ENCODE measurements at regions of chr11 and their contacts with region 1.

Region 1: GRCh38 chr11:69642913-69643632 is 2.1 kb downstream of the CCND1 start:
- DNase-seq: peak; percentile 87
- CTCF ChIP-seq: peak; percentile 89

Region 2: GRCh38 chr11:69101115-69101791 is 541.8 kb before region 1 on chr11:
- CTCF ChIA-PET with region 1: interaction called, 62 read pairs
- POLR2A ChIA-PET with region 1: no interaction called
- DNase-seq: peak; percentile 86
- CTCF ChIP-seq: peak; percentile 99

Region 3: GRCh38 chr11:69463181-69463994 is 179.7 kb before region 1 on chr11:
- CTCF ChIA-PET with region 1: no interaction called
- POLR2A ChIA-PET with region 1: no interaction called
- DNase-seq: no peak
- CTCF ChIP-seq: no peak

Region 4: DNA sequence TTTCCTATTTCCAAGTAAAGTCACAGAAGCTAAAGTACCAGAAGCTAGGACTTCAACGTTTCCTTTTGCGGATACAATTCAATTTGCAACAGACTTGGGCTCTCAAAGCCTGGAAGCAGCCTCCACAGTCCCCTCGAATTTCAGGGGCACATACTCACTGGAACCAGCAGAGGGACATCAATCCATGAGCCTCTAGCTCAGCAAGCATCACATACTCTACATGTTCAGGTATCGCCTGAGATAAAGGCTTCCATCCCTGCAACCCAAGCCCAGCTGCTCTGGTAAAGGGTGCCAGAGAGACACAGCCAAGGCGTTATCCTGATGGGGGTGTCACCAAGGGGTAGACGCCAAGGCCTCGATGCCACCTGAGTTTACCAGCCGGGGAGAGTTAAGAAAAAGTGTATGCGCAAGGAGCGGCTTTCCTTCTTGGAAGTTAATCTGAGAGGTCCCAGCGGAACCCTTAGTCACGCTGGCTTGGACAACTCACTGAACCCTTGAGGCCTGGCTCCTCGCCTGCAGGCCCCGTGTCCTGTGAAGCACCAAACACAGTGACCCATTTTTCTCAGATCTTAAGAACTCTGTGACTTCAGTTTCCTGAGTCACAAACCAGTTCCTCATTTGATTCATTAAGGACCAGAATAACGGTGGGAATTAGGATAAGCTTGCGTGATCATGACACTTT is 19.1 kb after region 1 on chr11:
- CTCF ChIA-PET with region 1: interaction called, 10 read pairs
- POLR2A ChIA-PET with region 1: no interaction called
- DNase-seq: no peak
- CTCF ChIP-seq: no peak

Region 5: DNA sequence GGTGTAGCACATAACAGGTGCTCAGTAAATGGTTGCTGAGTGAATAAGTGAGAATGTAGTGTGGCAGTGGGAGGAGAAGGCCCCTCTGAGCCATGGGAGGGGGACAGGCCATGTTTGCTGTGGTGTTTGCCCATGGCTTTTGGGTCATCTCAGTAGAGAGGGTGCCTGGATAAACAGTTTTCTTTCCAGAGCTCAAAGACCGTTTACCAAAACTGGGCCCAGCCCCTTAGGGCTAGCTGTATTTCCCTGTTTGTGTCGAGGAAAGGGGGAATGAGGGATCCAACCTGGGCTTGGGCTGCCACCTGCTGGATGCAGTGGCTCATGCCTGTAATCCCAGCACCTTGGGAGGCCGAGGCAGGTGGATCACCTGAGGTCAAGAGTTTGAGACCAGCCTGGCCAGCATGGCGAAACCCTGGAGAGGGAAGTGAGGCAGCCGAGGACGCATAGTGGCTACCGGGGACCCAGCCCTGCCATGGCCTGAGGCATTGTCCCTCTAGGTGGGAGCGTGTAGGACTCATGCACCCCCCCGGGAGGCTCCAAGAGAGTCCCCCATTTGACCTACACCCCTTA is 40.8 kb after region 1 on chr11:
- CTCF ChIA-PET with region 1: no interaction called
- POLR2A ChIA-PET with region 1: no interaction called
- DNase-seq: no peak
- CTCF ChIP-seq: no peak

Measured in GM10248 (cell line).